Panc1 (cell line): ENCODE measurements at regions of chr18 and their contacts with region 1.

Region 1: GRCh38 chr18:9925369-9925768 is 11.6 kb downstream of the VAPA start:
- DNase-seq: no peak
- ATAC-seq: no peak
- H3K4me3 ChIP-seq: no peak overlapping the region
- H3K27ac ChIP-seq: no peak overlapping the region
- H3K4me1 ChIP-seq: peaks cover 74% of the 10 kb centered on the region
- H3K27me3 ChIP-seq: no peaks in the 10 kb centered on the region
- CTCF ChIP-seq: no peak

Region 2: DNA sequence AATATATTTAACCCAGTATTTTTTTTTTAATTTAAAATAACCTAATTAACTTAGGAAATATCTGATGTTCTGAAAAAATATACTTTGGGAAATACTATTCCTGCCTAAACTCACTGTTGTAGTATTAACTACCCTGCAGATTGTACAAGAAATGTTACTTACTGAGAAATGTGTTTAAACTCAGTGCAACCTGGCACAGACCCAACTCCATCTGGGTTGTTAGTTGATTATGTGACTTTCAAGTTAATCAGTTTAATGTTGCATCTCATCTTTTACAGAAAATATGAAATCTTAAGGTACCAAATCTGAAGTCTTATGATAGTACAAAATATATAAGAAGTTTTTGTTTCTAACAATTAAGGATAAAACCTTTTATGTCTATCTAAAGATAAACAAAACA is 15.7 kb after region 1 on chr18:
- CTCF ChIA-PET with region 1: no interaction called
- POLR2A ChIA-PET with region 1: interaction called, 13 read pairs
- in situ Hi-C with region 1: no loop called
- intact Hi-C with region 1: no loop called
- DNase-seq: no peak
- ATAC-seq: no peak
- H3K4me3 ChIP-seq: no peak overlapping the region
- H3K27ac ChIP-seq: no peak overlapping the region
- H3K4me1 ChIP-seq: no peaks in the 10 kb centered on the region
- H3K27me3 ChIP-seq: no peaks in the 10 kb centered on the region
- CTCF ChIP-seq: no peak